Activated CD4-positive, alpha-beta memory T cell treated with anti-CD3 and anti-CD28 coated beads for 36 hours (primary cell): ENCODE measurements at regions of chr1 and their contacts with region 1.

Region 1: GRCh38 chr1:110645821-110646735 is 28.7 kb downstream of the KCNA3 start:
- DNase-seq: no peak
- H3K4me3 Mint-ChIP-seq: peak overlapping the region; percentile 1
- H3K27ac Mint-ChIP-seq: peak overlapping the region; percentile 70
- H3K4me1 Mint-ChIP-seq: peaks cover 42% of the 10 kb centered on the region
- H3K27me3 Mint-ChIP-seq: no peaks in the 10 kb centered on the region

Region 2: DNA sequence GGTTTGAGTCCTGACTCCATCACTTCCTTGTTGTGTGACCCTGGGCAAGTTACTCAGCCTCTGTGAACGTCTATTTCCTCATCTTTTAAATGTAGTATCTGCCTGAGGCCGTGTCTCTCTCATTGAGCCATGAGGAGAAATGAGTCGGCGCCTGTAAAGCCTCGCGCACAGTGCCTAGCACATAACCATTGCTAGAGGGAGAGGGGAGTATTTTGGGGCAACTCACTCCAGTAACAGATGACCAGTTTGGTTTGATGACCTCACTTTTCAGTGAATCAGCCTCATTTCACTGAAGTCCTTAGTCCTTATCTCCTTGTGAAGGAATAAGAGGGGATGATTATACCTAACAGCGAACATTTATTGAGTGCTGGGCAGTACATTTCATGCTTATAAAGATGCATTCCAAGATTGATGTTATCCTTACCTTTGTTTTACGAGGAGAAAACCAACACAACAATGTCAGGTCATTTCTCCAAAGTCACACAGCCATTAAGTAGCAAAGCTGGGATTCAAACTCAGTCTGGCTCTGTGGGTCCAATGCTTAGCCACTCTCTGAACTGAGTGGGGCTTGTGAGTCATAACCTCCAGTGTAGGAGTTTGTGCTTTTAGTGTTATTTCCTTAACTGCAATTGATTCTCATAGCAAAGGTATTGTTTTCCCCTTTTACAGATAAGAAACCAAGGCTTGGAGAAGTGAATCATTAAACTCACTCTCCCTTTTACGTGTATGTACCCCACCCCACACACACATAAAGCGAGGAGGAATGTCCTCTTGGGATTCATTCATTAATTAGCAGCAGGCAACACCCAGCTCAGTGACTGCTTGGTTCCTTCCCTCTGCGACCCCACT is 410.0 kb before region 1 on chr1:
- CTCF ChIA-PET with region 1: no interaction called
- POLR2A ChIA-PET with region 1: no interaction called
- intact Hi-C with region 1: loop called (anchors 5 kb)
- DNase-seq: peak; percentile 86
- H3K4me3 Mint-ChIP-seq: peak overlapping the region; percentile 22
- H3K27ac Mint-ChIP-seq: peak overlapping the region; percentile 97
- H3K4me1 Mint-ChIP-seq: peaks cover 56% of the 10 kb centered on the region
- H3K27me3 Mint-ChIP-seq: no peaks in the 10 kb centered on the region

Region 3: DNA sequence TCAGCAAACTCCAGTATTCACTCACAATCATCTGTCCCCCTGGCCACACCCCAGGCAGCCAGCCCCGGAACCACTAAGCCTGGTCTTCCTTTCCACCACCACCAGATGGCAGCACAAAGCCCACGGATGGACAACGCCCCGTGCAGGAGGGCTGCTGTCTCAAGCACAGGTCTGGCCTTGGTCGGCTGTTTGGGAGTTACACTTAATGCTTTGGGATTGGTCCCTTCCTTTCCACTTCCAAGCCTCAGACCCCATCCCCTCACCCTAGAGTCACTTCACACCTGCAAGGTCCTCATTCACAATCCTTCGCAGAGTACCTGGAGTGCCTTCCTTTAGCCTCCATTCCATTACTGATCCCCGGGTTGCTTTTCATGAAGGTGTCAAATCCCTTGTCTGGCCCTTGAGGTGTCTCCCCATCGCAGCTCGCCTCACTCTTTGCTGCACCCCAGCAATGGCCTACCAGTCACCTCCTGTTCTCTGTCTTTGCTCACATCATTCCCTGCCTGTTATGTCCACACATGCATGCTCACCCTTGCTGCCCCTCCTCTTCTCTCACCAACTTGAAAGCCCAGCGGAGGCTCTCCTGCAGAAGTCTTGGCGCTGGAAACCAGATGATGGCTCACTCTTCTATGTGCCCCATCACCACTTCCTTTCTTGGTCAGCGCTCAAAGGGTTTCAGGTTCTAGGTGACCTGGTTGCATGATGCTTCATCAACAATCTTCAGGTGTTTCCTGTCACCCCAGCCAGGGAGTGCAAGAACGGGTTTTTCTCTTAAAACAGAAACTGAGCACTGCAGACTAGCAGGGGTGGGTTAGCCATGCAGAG is 15.0 kb before region 1 on chr1:
- CTCF ChIA-PET with region 1: interaction called, 98 read pairs
- POLR2A ChIA-PET with region 1: interaction called, 88 read pairs
- intact Hi-C with region 1: loop called (anchors 1 kb)
- DNase-seq: peak; percentile 92
- H3K4me3 Mint-ChIP-seq: no peak overlapping the region
- H3K27ac Mint-ChIP-seq: no peak overlapping the region
- H3K4me1 Mint-ChIP-seq: peaks cover 66% of the 10 kb centered on the region
- H3K27me3 Mint-ChIP-seq: no peaks in the 10 kb centered on the region

Region 4: GRCh38 chr1:110811529-110811928 is 165.5 kb after region 1 on chr1:
- CTCF ChIA-PET with region 1: no interaction called
- POLR2A ChIA-PET with region 1: no interaction called
- intact Hi-C with region 1: no loop called
- DNase-seq: no peak
- H3K4me3 Mint-ChIP-seq: no peak overlapping the region
- H3K27ac Mint-ChIP-seq: no peak overlapping the region
- H3K4me1 Mint-ChIP-seq: peaks cover 3% of the 10 kb centered on the region
- H3K27me3 Mint-ChIP-seq: no peaks in the 10 kb centered on the region

Region 5: GRCh38 chr1:110872745-110873720 is 227.0 kb after region 1 on chr1 and contains the start of gene CD53:
- CTCF ChIA-PET with region 1: no interaction called
- POLR2A ChIA-PET with region 1: interaction called, 10 read pairs
- intact Hi-C with region 1: loop called (anchors 2 kb)
- DNase-seq: peak; percentile 63
- H3K4me3 Mint-ChIP-seq: peak within 1 kb of the TSS; percentile 98
- H3K27ac Mint-ChIP-seq: peak within 1 kb of the TSS; percentile 99
- H3K4me1 Mint-ChIP-seq: peaks cover 37% of the 10 kb centered on the region
- H3K27me3 Mint-ChIP-seq: no peaks in the 10 kb centered on the region
- total RNA-seq, gene CD53: 240 to 246 TPM

Region 6: DNA sequence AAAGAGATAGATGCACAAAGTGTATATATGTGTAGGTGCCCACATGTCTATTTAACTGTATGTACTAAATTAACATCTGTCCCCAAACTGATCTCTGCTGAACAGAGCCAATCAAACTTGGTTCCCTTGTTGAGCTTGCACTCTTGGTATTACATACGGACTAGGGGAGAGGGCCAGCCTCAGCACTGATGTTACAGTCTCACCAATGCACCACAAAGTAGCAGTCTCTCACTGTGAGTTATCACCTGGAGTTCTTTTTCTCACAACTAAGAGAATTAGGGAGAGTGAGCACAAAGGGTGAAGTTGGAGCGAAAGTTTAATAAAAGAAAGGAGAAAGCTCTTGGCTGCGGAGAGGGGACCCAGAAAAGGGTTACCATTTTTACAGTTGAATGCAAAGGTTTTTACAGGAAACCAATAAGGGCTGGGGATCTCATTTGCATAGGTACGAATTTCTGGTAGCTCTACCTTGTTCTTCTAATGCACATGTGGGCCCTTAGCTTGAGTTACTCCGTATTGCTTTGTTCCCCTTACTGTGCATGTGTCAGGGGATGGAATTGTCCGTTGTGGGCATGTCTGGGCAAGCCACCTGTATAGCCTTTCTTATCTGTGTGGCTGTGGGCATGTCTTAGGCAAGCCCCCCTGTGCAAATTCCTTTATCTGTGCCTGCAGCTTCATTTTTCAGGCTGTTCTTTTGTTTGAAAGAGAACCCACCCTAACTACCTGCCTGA is 568.2 kb after region 1 on chr1:
- CTCF ChIA-PET with region 1: no interaction called
- POLR2A ChIA-PET with region 1: no interaction called
- intact Hi-C with region 1: loop called (anchors 2 kb)
- DNase-seq: peak; percentile 45
- H3K4me3 Mint-ChIP-seq: peak overlapping the region; percentile 66
- H3K27ac Mint-ChIP-seq: peak overlapping the region; percentile 95
- H3K4me1 Mint-ChIP-seq: peaks cover 72% of the 10 kb centered on the region
- H3K27me3 Mint-ChIP-seq: peaks cover 3% of the 10 kb centered on the region